Gastrocnemius medialis (tissue), 4 donors: ENCODE measurements at regions of chr17 and their contacts with region 1.

Region 1: GRCh38 chr17:76121932-76122430 is 18.4 kb upstream of the EXOC7 start:
- DNase-seq: no peak
- ATAC-seq: peak; percentile 24 to 44
- H3K4me3 ChIP-seq: peak overlapping the region; percentile 28 to 50 (median 42)
- H3K27ac ChIP-seq: peak overlapping the region in 2 of 4 donors; percentile 10 to 39
- H3K4me1 ChIP-seq: peaks cover 3% of the 10 kb centered on the region in 2 donors
- H3K27me3 ChIP-seq: no peaks in the 10 kb centered on the region
- CTCF ChIP-seq: no peak
- POLR2A ChIP-seq: no peak

Region 2: GRCh38 chr17:75959051-75959838 is 162.7 kb before region 1 on chr17:
- in situ Hi-C with region 1: no loop called
- intact Hi-C with region 1: no loop called
- DNase-seq: no peak
- ATAC-seq: no peak
- H3K4me3 ChIP-seq: no peak overlapping the region
- H3K27ac ChIP-seq: no peak overlapping the region
- H3K4me1 ChIP-seq: no peaks in the 10 kb centered on the region
- H3K27me3 ChIP-seq: no peaks in the 10 kb centered on the region
- CTCF ChIP-seq: no peak
- POLR2A ChIP-seq: no peak

Region 3: GRCh38 chr17:76141212-76142038 is 19.4 kb after region 1 on chr17 and contains the start of gene FOXJ1:
- in situ Hi-C with region 1: no loop called
- intact Hi-C with region 1: no loop called
- DNase-seq: peak; percentile 69 to 86
- ATAC-seq: peak; percentile 84 to 89
- H3K4me3 ChIP-seq: peak within 1 kb of the TSS; percentile 50 to 68 (median 58)
- H3K27ac ChIP-seq: peak within 1 kb of the TSS in 1 of 4 donors; percentile 3
- H3K4me1 ChIP-seq: peaks cover 23 to 28% of the 10 kb centered on the region in 2 donors
- H3K27me3 ChIP-seq: peaks cover 46% of the 10 kb centered on the region in 3 donors
- CTCF ChIP-seq: no peak
- POLR2A ChIP-seq: no peak
- total RNA-seq, gene FOXJ1: 0.16 to 0.62 TPM in 2 of 4 donors, not detected in the others

Region 4: GRCh38 chr17:76182016-76182764 is 60.2 kb after region 1 on chr17:
- in situ Hi-C with region 1: loop called in 1 of 4 experiments (anchors 10 kb)
- intact Hi-C with region 1: loop called (anchors 2 kb)
- DNase-seq: peak; percentile 75 to 89
- ATAC-seq: peak; percentile 85 to 87
- H3K4me3 ChIP-seq: no peak overlapping the region
- H3K27ac ChIP-seq: peak overlapping the region; percentile 8 to 39 (median 26)
- H3K4me1 ChIP-seq: peaks cover 17 to 35% of the 10 kb centered on the region in 2 donors
- H3K27me3 ChIP-seq: no peaks in the 10 kb centered on the region
- CTCF ChIP-seq: peak; percentile 74 to 84 (median 77)
- POLR2A ChIP-seq: no peak

Region 5: DNA sequence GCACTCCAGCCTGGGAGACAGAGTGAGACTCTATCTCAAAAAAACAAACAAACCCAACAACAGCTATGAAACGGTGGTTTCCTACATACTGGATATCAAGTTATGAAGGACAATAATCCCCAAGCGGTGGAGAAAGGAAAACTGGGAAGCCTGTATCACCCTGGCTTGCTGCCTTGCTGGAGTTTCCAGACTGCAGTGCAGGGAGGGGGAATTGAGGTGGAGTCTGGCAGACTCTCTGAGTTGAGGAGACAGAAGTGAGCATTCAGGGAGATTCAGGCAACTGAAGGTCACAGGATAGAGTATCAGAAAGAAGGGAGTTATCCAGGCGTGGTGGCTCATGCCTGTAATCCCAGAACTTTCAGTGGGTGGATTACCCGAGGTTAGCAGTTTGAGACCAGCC is 174.2 kb after region 1 on chr17:
- in situ Hi-C with region 1: loop called (anchors 5 to 10 kb)
- intact Hi-C with region 1: loop called (anchors 1 kb)
- DNase-seq: no peak
- ATAC-seq: no peak
- H3K4me3 ChIP-seq: no peak overlapping the region
- H3K27ac ChIP-seq: no peak overlapping the region
- H3K4me1 ChIP-seq: no peaks in the 10 kb centered on the region
- H3K27me3 ChIP-seq: no peaks in the 10 kb centered on the region
- CTCF ChIP-seq: no peak
- POLR2A ChIP-seq: no peak

Region 6: GRCh38 chr17:76408052-76408849 is 286.3 kb after region 1 on chr17:
- in situ Hi-C with region 1: no loop called
- intact Hi-C with region 1: loop called (anchors 10 kb)
- DNase-seq: peak in 1 of 2 donors; percentile 65
- ATAC-seq: peak in 1 of 2 donors; percentile 33
- H3K4me3 ChIP-seq: no peak overlapping the region
- H3K27ac ChIP-seq: no peak overlapping the region
- H3K4me1 ChIP-seq: peaks cover 35 to 47% of the 10 kb centered on the region in 2 donors
- H3K27me3 ChIP-seq: no peaks in the 10 kb centered on the region
- CTCF ChIP-seq: peak; percentile 65 to 77 (median 66)
- POLR2A ChIP-seq: no peak